Ovary (tissue), 10 donors: ENCODE measurements at regions of chr14 and their contacts with region 1.

Region 1: GRCh38 chr14:20682435-20683124 is 1.8 kb upstream of the RNASE4 start:
- DNase-seq: peak; percentile 92 to 95 (median 92)
- H3K4me3 ChIP-seq: peak overlapping the region; percentile 82
- H3K27ac ChIP-seq: peak overlapping the region; percentile 98
- H3K4me1 ChIP-seq: peaks cover 8% of the 10 kb centered on the region
- H3K27me3 ChIP-seq: no peaks in the 10 kb centered on the region
- CTCF ChIP-seq: peak in 1 of 3 donors; percentile 15
- EP300 ChIP-seq: no peak
- POLR2A ChIP-seq: peak; percentile 99

Region 2: GRCh38 chr14:20343092-20343861 is 339.3 kb before region 1 on chr14 and contains the start of gene PARP2:
- intact Hi-C with region 1: loop called in 3 of 4 experiments (anchors 5 to 10 kb)
- DNase-seq: peak; percentile 96 to 97 (median 97)
- H3K4me3 ChIP-seq: peak within 1 kb of the TSS; percentile 60
- H3K27ac ChIP-seq: peak within 1 kb of the TSS; percentile 89 to 92
- H3K4me1 ChIP-seq: no peaks in the 10 kb centered on the region
- H3K27me3 ChIP-seq: no peaks in the 10 kb centered on the region
- CTCF ChIP-seq: peak in 1 of 3 donors; percentile 16
- EP300 ChIP-seq: peak; percentile 76
- POLR2A ChIP-seq: peak; percentile 89
- total RNA-seq, gene PARP2: 7.1 to 25.6 (median 22.8) TPM

Region 3: DNA sequence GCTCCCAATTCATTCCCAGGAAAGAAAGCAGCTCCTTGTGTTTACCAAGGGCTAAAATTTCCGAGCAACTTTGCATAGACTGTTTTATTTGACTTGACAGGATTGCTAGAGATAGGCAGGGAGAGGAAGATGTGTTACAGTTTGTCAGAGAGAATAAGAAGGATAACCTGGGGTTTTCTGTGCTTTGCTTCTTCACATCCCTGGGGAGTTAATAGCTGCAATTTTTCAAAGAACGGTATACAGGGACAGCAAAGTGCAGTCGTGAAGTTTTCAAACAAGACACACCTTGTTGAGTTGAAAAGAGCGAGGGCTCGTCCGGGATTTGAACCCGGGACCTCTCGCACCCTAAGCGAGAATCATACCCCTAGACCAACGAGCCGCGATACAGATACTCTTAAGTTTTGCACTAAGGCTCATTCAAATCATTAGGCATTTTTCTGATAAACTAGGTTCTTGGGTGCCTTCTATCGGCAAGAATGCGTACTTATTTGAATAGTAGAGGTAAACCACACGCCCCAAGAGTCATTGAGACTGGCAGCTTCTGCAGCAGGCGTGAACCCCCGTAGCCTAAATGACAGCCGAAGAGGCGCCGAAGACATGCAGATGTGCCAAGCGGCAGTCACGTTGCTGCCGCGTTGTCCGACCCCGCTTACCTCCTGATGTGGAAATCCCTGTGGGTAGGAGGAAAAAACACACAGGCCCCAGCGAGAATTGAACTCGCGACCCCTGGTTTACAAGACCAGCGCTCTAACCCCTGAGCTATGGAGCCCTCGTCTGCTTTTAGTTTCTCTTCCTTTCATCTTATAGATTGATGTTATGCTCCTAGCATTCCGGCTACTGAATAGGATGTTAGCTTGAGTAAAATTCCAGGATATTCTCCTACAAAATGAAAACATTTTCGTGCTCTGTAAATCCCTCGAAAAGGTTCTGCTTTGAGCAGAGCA is 69.2 kb before region 1 on chr14:
- intact Hi-C with region 1: loop called (anchors 1 to 5 kb)
- DNase-seq: peak; percentile 80 to 88 (median 86)
- H3K4me3 ChIP-seq: peak overlapping the region; percentile 57
- H3K27ac ChIP-seq: peak overlapping the region; percentile 73 to 79
- H3K4me1 ChIP-seq: no peaks in the 10 kb centered on the region
- H3K27me3 ChIP-seq: no peaks in the 10 kb centered on the region
- CTCF ChIP-seq: peak; percentile 50 to 96 (median 95)
- EP300 ChIP-seq: no peak
- POLR2A ChIP-seq: no peak

Region 4: GRCh38 chr14:20632682-20633428 is 49.7 kb before region 1 on chr14:
- intact Hi-C with region 1: loop called in 2 of 4 experiments (anchors 5 kb)
- DNase-seq: peak in 4 of 5 donors; percentile 47 to 81 (median 68)
- H3K4me3 ChIP-seq: peak overlapping the region; percentile 33
- H3K27ac ChIP-seq: no peak overlapping the region
- H3K4me1 ChIP-seq: peaks cover 5% of the 10 kb centered on the region
- H3K27me3 ChIP-seq: no peaks in the 10 kb centered on the region
- CTCF ChIP-seq: no peak
- EP300 ChIP-seq: no peak
- POLR2A ChIP-seq: peak; percentile 6

Region 5: GRCh38 chr14:20774338-20774737 is 91.8 kb after region 1 on chr14:
- intact Hi-C with region 1: no loop called
- DNase-seq: no peak
- H3K4me3 ChIP-seq: no peak overlapping the region
- H3K27ac ChIP-seq: no peak overlapping the region
- H3K4me1 ChIP-seq: no peaks in the 10 kb centered on the region
- H3K27me3 ChIP-seq: no peaks in the 10 kb centered on the region
- CTCF ChIP-seq: no peak
- EP300 ChIP-seq: no peak
- POLR2A ChIP-seq: no peak

Region 6: DNA sequence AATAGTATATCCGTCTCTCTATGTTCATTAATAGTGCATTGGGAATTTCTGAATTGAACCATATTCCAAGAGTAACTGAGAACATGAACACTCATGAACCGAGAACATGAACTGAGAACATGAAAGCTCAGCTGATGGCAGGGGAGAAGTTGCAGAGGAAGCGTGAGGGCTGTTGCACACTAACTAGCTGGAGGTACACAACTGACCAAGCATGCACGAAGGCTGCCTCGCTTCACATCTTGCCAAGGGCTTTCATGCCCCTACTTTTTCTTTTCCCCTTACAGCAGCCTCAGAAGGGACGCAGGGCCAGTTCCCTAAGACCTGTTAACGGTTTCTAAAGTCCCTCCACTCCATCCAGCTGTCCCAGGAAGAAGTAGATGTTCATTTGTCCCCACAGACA is 115.7 kb after region 1 on chr14:
- intact Hi-C with region 1: no loop called
- DNase-seq: no peak
- H3K4me3 ChIP-seq: no peak overlapping the region
- H3K27ac ChIP-seq: no peak overlapping the region
- H3K4me1 ChIP-seq: peaks cover 7% of the 10 kb centered on the region
- H3K27me3 ChIP-seq: no peaks in the 10 kb centered on the region
- CTCF ChIP-seq: no peak
- EP300 ChIP-seq: no peak
- POLR2A ChIP-seq: no peak

Region 7: DNA sequence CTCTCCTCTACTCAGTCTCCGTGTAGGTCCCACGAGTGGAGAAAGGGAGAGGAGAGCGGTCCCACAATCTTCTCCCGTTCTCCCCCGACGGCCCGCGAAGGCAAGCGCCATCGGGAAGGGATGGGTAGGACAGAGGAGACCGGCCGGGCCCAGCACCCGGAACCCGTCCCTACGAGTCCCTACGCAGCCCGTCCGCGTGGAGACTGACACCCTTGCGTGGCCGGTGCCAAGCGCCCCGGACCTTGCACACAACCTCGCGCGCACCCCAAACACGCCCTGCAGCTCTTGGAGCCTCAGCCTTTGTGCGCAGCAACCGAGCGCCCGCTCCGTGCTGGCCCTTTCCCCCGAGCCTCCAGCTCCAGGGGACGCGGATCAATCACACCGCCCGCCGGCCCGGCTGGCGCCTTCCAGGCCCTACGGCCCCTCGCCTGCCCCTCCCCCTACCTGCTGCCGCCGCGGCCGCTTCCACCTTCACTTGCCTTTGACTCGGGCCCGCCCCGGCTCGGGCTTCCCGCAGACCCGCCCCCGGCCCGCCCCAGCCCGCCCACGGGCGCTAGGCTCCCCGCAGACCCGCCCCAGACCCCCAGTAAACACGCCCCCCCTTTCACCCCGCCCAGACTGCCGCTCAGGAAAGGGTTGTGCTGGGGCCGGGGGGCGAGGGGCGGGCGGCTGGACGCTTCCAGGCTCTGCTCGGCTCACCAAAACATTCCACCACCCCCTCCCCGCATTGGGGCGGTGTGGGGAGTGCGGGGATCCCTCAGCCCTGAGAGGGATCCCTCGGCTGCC is 342.2 kb after region 1 on chr14 and contains the start of gene NDRG2:
- intact Hi-C with region 1: loop called in 1 of 4 experiments (anchors 10 kb)
- DNase-seq: peak; percentile 86 to 93 (median 88)
- H3K4me3 ChIP-seq: peak within 1 kb of the TSS; percentile 93
- H3K27ac ChIP-seq: peak within 1 kb of the TSS; percentile 90 to 97
- H3K4me1 ChIP-seq: peaks cover 9% of the 10 kb centered on the region
- H3K27me3 ChIP-seq: no peaks in the 10 kb centered on the region
- CTCF ChIP-seq: no peak
- EP300 ChIP-seq: no peak
- POLR2A ChIP-seq: no peak
- total RNA-seq, gene NDRG2: 355 to 703 (median 417) TPM

Region 8: GRCh38 chr14:21103710-21104447 is 421.3 kb after region 1 on chr14:
- intact Hi-C with region 1: loop called in 2 of 4 experiments (anchors 10 kb)
- DNase-seq: peak; percentile 95 to 97 (median 96)
- H3K4me3 ChIP-seq: peak overlapping the region; percentile 57
- H3K27ac ChIP-seq: peak overlapping the region; percentile 93 to 96
- H3K4me1 ChIP-seq: peaks cover 4% of the 10 kb centered on the region
- H3K27me3 ChIP-seq: no peaks in the 10 kb centered on the region
- CTCF ChIP-seq: peak; percentile 77 to 95 (median 92)
- EP300 ChIP-seq: no peak
- POLR2A ChIP-seq: peak; percentile 69